OCI-LY7 (cell line): ENCODE measurements at regions of chr1 and their contacts with region 1.

Region 1: DNA sequence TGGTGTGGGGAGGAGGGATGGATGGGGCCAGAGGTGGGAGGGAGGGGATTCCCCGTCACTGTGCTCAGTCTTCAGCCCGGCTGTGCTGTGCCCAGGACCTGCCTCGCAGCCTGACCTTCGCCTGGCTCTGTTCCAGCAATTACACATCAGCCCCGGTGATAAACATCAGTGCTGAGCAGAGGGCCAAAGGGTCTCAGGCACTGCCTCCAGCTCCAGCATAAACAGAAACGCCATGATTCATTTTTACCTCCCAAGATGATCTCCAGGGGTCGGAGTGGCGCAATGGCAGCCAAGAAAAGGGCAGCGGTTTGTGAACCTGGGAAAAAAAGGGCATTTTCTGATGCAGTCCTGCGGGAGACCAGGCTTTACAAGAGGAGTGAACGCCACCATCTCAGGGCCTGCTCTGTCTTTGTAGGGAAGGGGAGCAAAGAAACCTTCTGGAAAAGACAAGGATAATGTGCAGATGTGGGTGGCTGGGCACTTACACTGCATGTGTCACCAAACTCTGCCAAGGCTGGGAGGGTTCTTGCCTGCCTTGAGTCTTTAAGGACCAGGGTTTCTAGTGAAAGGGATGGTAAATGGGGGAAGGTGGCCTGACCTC is 28.1 kb downstream of the SHISA4 start:
- DNase-seq: no peak
- H3K4me3 ChIP-seq: no peak overlapping the region
- H3K27ac ChIP-seq: no peak overlapping the region
- H3K4me1 ChIP-seq: no peaks in the 10 kb centered on the region
- CTCF ChIP-seq: no peak

Region 2: DNA sequence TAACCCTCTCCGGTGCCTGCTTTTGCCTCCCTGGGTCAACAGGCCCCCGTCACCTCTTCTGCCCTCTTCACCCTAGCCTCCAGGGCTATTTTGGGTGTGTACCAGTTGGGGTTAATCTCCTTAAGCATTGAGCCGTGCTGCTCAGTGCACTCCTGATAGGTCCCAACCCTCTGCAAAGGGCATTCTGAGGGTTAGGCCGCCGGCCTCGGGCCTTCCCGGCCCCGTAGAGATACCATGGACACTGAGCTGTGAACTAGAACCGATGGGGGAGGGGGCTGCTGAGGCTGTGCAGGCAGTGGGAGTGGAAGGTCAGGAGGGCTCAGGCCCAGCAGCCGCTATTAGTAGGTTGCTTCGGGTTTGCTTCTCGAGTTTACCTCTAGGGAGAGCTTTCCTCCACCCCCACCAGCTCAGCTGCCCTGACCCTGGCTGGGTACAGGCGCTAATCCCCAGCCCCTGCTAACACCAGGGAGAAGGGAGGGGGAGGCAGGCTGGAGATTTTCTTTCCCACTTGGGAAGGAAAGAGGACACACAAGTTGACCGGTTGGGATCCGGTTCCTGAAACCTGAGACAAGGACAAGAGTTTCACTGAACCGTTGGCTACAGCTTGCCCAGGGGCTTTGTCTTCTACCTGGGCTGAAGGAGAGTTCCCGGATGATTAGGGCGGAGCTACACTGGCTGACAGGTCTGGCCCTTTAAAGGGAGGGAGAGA is 24.8 kb after region 1 on chr1:
- CTCF ChIA-PET with region 1: no interaction called
- POLR2A ChIA-PET with region 1: interaction called, 15 read pairs
- intact Hi-C with region 1: no loop called
- DNase-seq: no peak
- H3K4me3 ChIP-seq: no peak overlapping the region
- H3K27ac ChIP-seq: no peak overlapping the region
- H3K4me1 ChIP-seq: no peaks in the 10 kb centered on the region
- CTCF ChIP-seq: no peak

Region 3: DNA sequence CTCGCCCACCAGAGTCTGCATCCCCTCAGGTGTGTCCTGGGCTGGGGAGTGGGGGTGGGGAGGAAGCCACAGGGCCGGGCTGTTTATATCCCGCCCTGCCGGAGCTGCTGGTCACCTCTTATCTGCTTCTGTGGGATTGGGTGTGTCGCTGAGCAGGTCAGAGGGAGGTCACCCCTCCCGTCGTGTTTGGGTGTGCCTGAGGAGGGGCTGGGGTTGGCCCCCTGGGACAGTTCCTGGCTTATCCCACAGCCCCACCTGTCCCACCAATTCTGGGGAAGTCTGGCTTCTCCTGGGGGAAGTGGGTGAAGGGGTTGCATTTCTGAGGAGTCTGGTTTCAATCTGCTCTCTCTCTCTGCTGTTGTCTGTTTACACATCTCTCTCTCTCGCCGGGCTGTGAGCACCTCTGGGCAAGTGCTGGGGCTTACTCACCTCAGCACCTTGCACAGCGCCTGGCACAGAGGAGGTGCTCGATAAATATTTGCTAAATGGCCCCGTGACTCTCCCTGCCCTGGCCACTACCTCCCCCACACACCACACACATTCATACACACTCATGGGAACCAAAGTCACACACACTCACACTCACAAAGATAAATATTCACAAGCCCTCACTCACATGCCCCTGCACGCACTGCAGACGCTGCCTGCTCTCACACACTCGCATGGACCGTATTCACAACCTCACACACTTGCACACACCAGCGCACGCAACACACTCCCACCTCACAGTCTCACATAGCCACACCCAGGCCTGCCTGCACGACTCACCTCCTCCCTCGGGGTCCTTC is 101.9 kb after region 1 on chr1:
- CTCF ChIA-PET with region 1: no interaction called
- POLR2A ChIA-PET with region 1: no interaction called
- intact Hi-C with region 1: no loop called
- DNase-seq: no peak
- H3K4me3 ChIP-seq: no peak overlapping the region
- H3K27ac ChIP-seq: no peak overlapping the region
- H3K4me1 ChIP-seq: no peaks in the 10 kb centered on the region
- CTCF ChIP-seq: no peak